Dorsolateral prefrontal cortex (tissue), 120 donors: ENCODE measurements at regions of chr1 and their contacts with region 1.

Region 1: DNA sequence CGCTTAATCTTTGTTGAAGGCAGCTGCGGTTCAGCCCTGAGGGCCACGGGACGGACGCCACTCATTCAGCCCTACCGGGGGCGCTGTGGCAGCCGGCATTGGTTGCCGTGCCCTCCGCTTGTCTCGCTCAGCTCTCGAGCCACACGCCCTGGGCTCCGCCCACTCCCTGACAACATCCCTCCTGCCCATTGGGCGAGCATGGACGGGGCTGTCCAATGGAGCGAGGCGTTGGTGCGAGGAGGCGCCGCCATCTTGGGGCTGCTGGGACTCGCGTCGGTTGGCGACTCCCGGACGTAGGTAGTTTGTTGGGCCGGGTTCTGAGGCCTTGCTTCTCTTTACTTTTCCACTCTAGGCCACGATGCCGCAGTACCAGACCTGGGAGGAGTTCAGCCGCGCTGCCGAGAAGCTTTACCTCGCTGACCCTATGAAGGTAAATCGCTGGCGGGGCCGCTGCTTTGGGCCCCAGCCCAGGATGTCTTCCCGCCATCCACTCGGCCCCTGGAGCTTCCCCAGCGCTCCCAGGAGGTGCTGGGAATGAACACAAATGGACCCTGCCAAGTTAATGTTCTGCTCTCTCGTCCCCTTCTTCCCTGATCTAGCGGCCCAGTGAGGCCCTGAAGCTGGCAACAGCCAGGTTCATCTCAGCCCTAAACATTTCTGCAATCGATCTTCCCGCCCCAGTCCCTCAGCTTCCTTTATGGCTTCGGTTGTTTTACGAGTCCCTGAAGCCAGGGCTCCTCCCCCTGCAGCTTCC is at the start of gene SRP9:
- DNase-seq: peak; percentile 96 to 99 (median 98)
- H3K4me3 ChIP-seq: peak within 1 kb of the TSS; percentile 36 to 99 (median 86)
- H3K27ac ChIP-seq: peak within 1 kb of the TSS; percentile 41 to 98 (median 93)
- H3K27me3 ChIP-seq: no peaks in the 10 kb centered on the region
- CTCF ChIP-seq: peak; percentile 67 to 96 (median 90)
- total RNA-seq, gene SRP9: 175 to 327 (median 230) TPM

Region 2: GRCh38 chr1:225548140-225548857 is 229.5 kb before region 1 on chr1:
- intact Hi-C with region 1: loop called in 1 of 2 experiments (anchors 10 kb)
- DNase-seq: no peak
- H3K4me3 ChIP-seq: no peak overlapping the region
- H3K27ac ChIP-seq: peak overlapping the region in 9 of 59 donors; percentile 10 to 62 (median 41)
- H3K27me3 ChIP-seq: no peaks in the 10 kb centered on the region
- CTCF ChIP-seq: no peak

Region 3: GRCh38 chr1:225733254-225733653 is 44.5 kb before region 1 on chr1:
- intact Hi-C with region 1: no loop called
- DNase-seq: no peak
- H3K4me3 ChIP-seq: no peak overlapping the region
- H3K27ac ChIP-seq: no peak overlapping the region
- H3K27me3 ChIP-seq: no peaks in the 10 kb centered on the region
- CTCF ChIP-seq: no peak

Region 4: GRCh38 chr1:225809842-225810578 is 32.2 kb after region 1 on chr1 and contains the start of gene EPHX1:
- intact Hi-C with region 1: loop called (anchors 1 to 5 kb)
- DNase-seq: peak; percentile 75 to 91 (median 82)
- H3K4me3 ChIP-seq: peak within 1 kb of the TSS; percentile 66 to 88 (median 78)
- H3K27ac ChIP-seq: peak within 1 kb of the TSS; percentile 35 to 97 (median 82)
- H3K27me3 ChIP-seq: no peaks in the 10 kb centered on the region
- CTCF ChIP-seq: peak in 35 of 56 donors; percentile 6 to 60 (median 30)
- total RNA-seq, gene EPHX1: 56.7 to 268 (median 111) TPM

Region 5: GRCh38 chr1:225875044-225875814 is 97.5 kb after region 1 on chr1:
- intact Hi-C with region 1: loop called (anchors 2 kb)
- DNase-seq: no peak
- H3K4me3 ChIP-seq: peak overlapping the region in 51 of 59 donors; percentile 7 to 74 (median 54)
- H3K27ac ChIP-seq: peak overlapping the region in 55 of 59 donors; percentile 30 to 100 (median 97)
- H3K27me3 ChIP-seq: no peaks in the 10 kb centered on the region
- CTCF ChIP-seq: no peak

Region 6: DNA sequence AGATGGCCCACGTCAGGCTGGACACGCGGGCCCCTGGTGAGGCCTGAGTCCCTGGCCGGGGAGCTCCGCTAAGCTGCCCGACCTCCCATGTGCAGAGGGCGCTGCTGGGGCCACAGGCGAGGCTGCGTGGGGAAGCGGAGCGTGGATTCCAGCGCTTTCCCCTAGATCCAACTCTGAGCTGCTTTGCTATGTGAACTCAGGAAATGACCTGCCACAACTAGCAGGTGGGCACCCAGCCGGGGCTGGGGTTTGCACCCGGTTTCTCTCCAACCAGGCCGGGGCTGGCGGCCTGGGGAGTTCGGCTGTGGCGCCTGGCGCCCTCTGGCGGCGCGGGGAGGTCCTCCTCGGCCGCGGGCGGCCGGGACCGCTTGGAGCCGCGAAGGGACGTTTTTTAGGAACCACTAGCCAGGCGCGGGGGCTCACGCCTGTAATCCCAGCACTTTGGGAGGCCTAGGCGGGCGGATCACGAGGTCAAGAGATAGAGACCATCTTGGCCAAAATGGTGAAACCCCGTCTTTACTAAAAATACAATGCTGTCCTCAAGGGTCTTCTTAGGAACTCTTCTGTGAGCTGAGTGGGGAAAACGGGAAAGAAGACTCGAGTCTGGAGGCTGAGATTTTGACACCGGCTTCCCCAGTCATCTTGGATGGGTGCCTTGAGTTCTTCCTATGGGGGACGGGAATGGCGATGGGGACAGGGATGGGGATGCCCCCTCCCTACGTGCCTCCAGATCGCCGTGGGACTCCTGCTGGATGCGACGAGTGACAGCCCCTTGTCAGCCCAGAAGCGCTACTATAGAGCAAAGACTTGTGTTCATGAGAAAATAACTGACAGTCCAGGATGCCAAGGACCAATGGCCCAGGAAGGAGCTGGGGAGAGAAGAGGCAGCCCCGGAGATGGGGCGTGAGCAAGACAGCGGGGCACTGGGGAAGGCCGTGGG is 133.7 kb after region 1 on chr1:
- intact Hi-C with region 1: loop called in 1 of 2 experiments (anchors 10 kb)
- DNase-seq: peak in 5 of 10 donors; percentile 30 to 78 (median 47)
- H3K4me3 ChIP-seq: peak overlapping the region in 24 of 59 donors; percentile 2 to 41 (median 18)
- H3K27ac ChIP-seq: peak overlapping the region in 20 of 59 donors; percentile 7 to 74 (median 36)
- H3K27me3 ChIP-seq: no peaks in the 10 kb centered on the region
- CTCF ChIP-seq: peak; percentile 33 to 93 (median 81)

Region 7: GRCh38 chr1:225977937-225978748 is 200.4 kb after region 1 on chr1:
- intact Hi-C with region 1: loop called (anchors 2 to 5 kb)
- DNase-seq: no peak
- H3K4me3 ChIP-seq: no peak overlapping the region
- H3K27ac ChIP-seq: no peak overlapping the region
- H3K27me3 ChIP-seq: no peaks in the 10 kb centered on the region
- CTCF ChIP-seq: no peak